Caco-2 (cell line): ENCODE measurements at regions of chr2 and their contacts with region 1.

Region 1: DNA sequence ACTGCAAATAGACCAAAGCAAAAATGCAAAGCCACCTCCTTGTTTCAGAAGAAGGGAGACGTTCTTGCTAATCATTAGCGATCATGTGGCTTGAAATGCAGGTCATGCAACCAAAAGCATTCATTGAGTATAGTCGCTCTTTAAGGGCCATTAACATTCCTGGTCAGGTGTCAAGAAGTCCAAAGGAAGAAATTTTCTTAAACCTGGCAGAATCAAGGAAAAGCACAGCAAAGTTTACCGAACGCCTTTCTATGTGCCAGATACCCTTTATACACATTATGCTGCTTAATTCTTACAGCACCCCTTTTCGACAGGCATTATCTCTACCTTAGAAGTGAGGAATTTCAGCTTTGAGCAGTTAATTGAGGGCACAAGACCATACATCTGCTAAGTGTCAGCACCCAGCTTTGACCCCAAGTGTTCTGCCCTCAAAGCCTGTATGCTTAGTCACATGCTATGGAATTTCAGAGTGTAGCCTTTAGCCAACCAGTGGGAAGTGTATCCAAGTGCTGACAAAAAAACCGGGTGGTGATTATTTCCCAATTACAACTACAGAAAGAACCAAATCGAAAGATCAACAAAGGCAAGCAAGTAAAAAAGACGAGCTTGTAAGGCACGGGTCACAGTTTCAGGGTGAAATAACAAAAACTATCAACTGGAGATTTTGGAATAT is 70.8 kb downstream of the EPHA4 start:
- DNase-seq: peak in 1 of 2 experiments; percentile 21
- H3K4me3 ChIP-seq: no peak overlapping the region
- H3K4me3 Mint-ChIP-seq: no peak overlapping the region
- H3K27ac Mint-ChIP-seq: peak overlapping the region; percentile 5
- H3K4me1 ChIP-seq: peaks cover 31% of the 10 kb centered on the region
- H3K4me1 Mint-ChIP-seq: peaks cover 28% of the 10 kb centered on the region
- H3K27me3 ChIP-seq: no peaks in the 10 kb centered on the region
- H3K27me3 Mint-ChIP-seq: no peaks in the 10 kb centered on the region
- CTCF ChIP-seq: no peak

Region 2: DNA sequence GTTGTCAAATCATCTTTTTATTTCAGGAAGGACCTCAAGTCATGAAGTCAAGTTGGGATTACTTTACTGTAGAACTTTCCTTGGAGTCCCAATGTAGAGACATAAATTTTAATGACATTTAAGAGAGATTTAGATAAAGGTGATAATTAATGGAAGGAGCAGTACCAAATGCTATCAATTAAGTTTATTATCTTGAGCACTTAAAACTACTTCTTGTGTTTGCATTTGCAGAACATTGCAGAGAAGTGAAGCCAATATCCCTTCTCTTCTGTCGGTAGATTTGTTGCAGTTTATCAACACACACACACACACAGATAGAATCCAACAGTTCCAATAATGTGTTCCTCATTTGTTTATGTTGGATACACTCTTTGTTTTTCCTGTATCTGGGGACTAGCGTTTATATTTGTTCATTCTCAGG is 500.0 kb before region 1 on chr2:
- CTCF ChIA-PET with region 1: no interaction called
- POLR2A ChIA-PET with region 1: no interaction called
- intact Hi-C with region 1: no loop called
- DNase-seq: no peak
- H3K4me3 ChIP-seq: no peak overlapping the region
- H3K4me3 Mint-ChIP-seq: no peak overlapping the region
- H3K27ac Mint-ChIP-seq: no peak overlapping the region
- H3K4me1 ChIP-seq: no peaks in the 10 kb centered on the region
- H3K4me1 Mint-ChIP-seq: no peaks in the 10 kb centered on the region
- H3K27me3 ChIP-seq: no peaks in the 10 kb centered on the region
- H3K27me3 Mint-ChIP-seq: peaks cover 6% of the 10 kb centered on the region
- CTCF ChIP-seq: no peak

Region 3: GRCh38 chr2:221212105-221212504 is 289.2 kb before region 1 on chr2:
- CTCF ChIA-PET with region 1: no interaction called
- POLR2A ChIA-PET with region 1: no interaction called
- intact Hi-C with region 1: no loop called
- DNase-seq: no peak
- H3K4me3 ChIP-seq: no peak overlapping the region
- H3K4me3 Mint-ChIP-seq: no peak overlapping the region
- H3K27ac Mint-ChIP-seq: no peak overlapping the region
- H3K4me1 ChIP-seq: no peaks in the 10 kb centered on the region
- H3K4me1 Mint-ChIP-seq: no peaks in the 10 kb centered on the region
- H3K27me3 ChIP-seq: no peaks in the 10 kb centered on the region
- H3K27me3 Mint-ChIP-seq: no peaks in the 10 kb centered on the region
- CTCF ChIP-seq: no peak

Region 4: GRCh38 chr2:221517696-221518151 is 16.4 kb after region 1 on chr2:
- CTCF ChIA-PET with region 1: no interaction called
- POLR2A ChIA-PET with region 1: no interaction called
- intact Hi-C with region 1: loop called (anchors 1 kb)
- DNase-seq: no peak
- H3K4me3 ChIP-seq: no peak overlapping the region
- H3K4me3 Mint-ChIP-seq: no peak overlapping the region
- H3K27ac Mint-ChIP-seq: no peak overlapping the region
- H3K4me1 ChIP-seq: peaks cover 43% of the 10 kb centered on the region
- H3K4me1 Mint-ChIP-seq: peaks cover 8% of the 10 kb centered on the region
- H3K27me3 ChIP-seq: no peaks in the 10 kb centered on the region
- H3K27me3 Mint-ChIP-seq: no peaks in the 10 kb centered on the region
- CTCF ChIP-seq: no peak